ENCODE measurements at regions of chr3 and their contacts with region 1.

Region 1: GRCh38 chr3:49493901-49494300 is 23.8 kb downstream of the DAG1 start:
- DNase-seq: no peak
- H3K27ac ChIP-seq: no peak overlapping the region
- CTCF ChIP-seq: no peak

Region 2: GRCh38 chr3:49370585-49371290 is 123.2 kb before region 1 on chr3:
- CTCF ChIA-PET with region 1: no interaction called
- POLR2A ChIA-PET with region 1: no interaction called
- DNase-seq: no peak
- H3K27ac ChIP-seq: no peak overlapping the region
- CTCF ChIP-seq: no peak

Region 3: GRCh38 chr3:49614936-49615335 is 121.0 kb after region 1 on chr3:
- CTCF ChIA-PET with region 1: no interaction called
- POLR2A ChIA-PET with region 1: interaction called, 11 read pairs
- DNase-seq: no peak
- H3K27ac ChIP-seq: no peak overlapping the region
- CTCF ChIP-seq: no peak